GM12878 (cell line): ENCODE measurements at regions of chr1 and their contacts with region 1.

Region 1: DNA sequence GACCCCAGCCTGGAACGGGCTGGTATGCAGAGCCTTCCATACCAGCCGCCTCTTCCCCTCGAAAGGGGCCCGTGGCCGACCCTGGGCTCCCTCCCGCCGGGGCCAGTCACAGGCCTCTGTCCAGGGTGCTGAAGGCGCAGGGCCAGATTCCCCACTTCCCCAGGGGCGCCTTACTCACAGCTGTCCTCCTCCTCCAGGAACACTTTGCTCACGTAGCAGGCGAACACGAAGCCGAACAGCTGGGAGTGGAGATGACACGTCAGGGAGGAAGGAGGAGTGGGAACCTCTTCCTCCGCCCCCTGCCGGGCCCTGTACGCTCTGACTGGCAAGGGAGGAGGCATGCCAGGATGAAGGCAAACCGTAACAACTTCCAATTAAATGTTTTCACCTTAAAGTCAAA is 57.3 kb downstream of the NKAIN1 start:
- DNase-seq: no peak
- ATAC-seq: peak; percentile 75
- H3K4me3 ChIP-seq: no peak overlapping the region
- H3K27ac ChIP-seq: no peak overlapping the region
- H3K4me1 ChIP-seq: no peaks in the 10 kb centered on the region
- H3K27me3 ChIP-seq: no peaks in the 10 kb centered on the region; a peak in 3 of 4 replicates
- CTCF ChIP-seq: 0 out of 6 replicates have a peak, but pooled peaks of 1 of the 3 experiments have one; percentile 1
- EP300 ChIP-seq: no peak
- POLR2A ChIP-seq: no peak
- RAD21 ChIP-seq: no peak

Region 2: DNA sequence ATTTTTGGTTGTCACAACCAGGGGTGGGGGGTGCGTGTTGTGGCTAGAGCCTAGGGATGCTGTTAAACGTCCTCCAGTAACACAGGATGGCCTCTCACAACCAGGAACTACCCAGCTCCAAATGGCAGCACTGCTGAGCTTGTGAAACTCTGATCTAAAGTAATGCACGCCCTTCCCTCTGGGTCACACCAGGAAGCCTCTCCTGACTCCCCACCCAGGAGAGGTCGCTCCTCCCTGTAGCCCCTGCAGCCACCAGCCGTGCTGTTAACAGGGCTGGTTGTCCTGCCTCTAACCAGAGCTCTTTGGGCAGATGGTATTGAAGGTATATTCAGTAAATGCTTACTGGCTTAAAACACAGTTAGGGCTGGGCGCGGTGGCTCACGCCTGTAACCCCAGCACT is 15.9 kb before region 1 on chr1:
- CTCF ChIA-PET with region 1: interaction called, 20 read pairs
- POLR2A ChIA-PET with region 1: no interaction called
- RAD21 ChIA-PET with region 1: interaction called, 4 read pairs
- SMC1A ChIA-PET with region 1: interaction called, 3 read pairs
- in situ Hi-C with region 1: no loop called
- intact Hi-C with region 1: no loop called
- DNase-seq: no peak
- ATAC-seq: no peak
- H3K4me3 ChIP-seq: no peak overlapping the region
- H3K27ac ChIP-seq: no peak overlapping the region
- H3K4me1 ChIP-seq: peaks cover 4% of the 10 kb centered on the region
- H3K27me3 ChIP-seq: no peaks in the 10 kb centered on the region; a peak in 1 of 4 replicates
- CTCF ChIP-seq: no peak
- EP300 ChIP-seq: no peak
- POLR2A ChIP-seq: no peak
- RAD21 ChIP-seq: no peak

Region 3: GRCh38 chr1:31335007-31335406 is 152.7 kb after region 1 on chr1:
- CTCF ChIA-PET with region 1: interaction called, 20 read pairs
- POLR2A ChIA-PET with region 1: no interaction called
- RAD21 ChIA-PET with region 1: interaction called, 4 read pairs
- SMC1A ChIA-PET with region 1: no interaction called
- in situ Hi-C with region 1: no loop called
- intact Hi-C with region 1: loop called (anchors 1 kb)
- DNase-seq: peak; percentile 7
- ATAC-seq: peak; percentile 70
- H3K4me3 ChIP-seq: no peak overlapping the region
- H3K27ac ChIP-seq: no peak overlapping the region
- H3K4me1 ChIP-seq: no peaks in the 10 kb centered on the region; the same call in 1 of the 2 replicates
- H3K27me3 ChIP-seq: no peaks in the 10 kb centered on the region
- CTCF ChIP-seq: peak; percentile 30 to 55 (median 39); a peak in 4 of 6 replicates
- EP300 ChIP-seq: no peak
- POLR2A ChIP-seq: no peak
- RAD21 ChIP-seq: peak; percentile 68

Region 4: DNA sequence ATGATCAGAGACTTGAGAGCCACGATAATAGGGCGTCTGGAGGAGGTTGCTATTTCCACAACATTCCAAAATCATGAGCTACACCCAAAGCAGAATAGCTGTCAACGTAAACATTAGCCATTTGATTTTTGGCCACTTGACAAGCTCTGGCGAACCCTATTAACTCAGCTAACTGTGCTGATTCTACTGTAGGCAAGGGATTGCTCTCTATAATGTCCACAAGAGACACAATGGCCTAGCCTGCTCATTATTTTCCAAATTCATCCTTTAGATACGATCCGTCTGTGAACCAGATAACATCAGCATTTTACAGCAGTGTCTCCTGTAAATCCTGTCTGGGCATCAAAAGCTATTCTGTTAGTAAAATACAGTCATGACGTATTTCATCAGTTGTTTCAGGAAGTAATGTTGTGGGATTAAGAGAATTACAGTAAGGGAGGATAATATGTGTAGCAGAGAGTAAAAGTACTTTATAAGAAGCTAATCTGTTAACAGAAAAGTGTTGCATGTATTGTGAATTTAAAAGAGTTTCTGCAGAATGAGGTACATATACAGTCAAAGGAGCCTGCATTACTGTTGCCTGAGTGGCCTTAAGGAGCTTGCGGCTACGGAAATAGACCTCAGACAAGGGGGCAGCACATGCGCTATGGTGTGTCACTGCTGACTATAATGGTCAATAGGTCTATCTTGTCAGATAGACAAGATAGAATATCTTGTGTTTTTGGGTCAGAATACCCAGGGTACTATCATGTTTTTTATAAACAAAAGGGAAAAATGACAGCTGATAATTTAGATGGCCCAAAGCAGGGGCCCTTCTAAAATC is 349.0 kb after region 1 on chr1:
- CTCF ChIA-PET with region 1: no interaction called
- POLR2A ChIA-PET with region 1: no interaction called
- RAD21 ChIA-PET with region 1: no interaction called
- SMC1A ChIA-PET with region 1: no interaction called
- in situ Hi-C with region 1: loop called (anchors 5 kb)
- intact Hi-C with region 1: no loop called
- DNase-seq: no peak
- ATAC-seq: no peak
- H3K4me3 ChIP-seq: no peak overlapping the region
- H3K27ac ChIP-seq: no peak overlapping the region
- H3K4me1 ChIP-seq: no peaks in the 10 kb centered on the region
- H3K27me3 ChIP-seq: no peaks in the 10 kb centered on the region; a peak in 1 of 4 replicates
- CTCF ChIP-seq: no peak
- EP300 ChIP-seq: no peak
- POLR2A ChIP-seq: no peak
- RAD21 ChIP-seq: no peak

Region 5: GRCh38 chr1:31771891-31772668 is 589.7 kb after region 1 on chr1:
- CTCF ChIA-PET with region 1: no interaction called
- POLR2A ChIA-PET with region 1: no interaction called
- RAD21 ChIA-PET with region 1: no interaction called
- SMC1A ChIA-PET with region 1: no interaction called
- in situ Hi-C with region 1: no loop called
- intact Hi-C with region 1: no loop called
- DNase-seq: no peak
- ATAC-seq: peak; percentile 9; the same call in 1 of the 3 replicates
- H3K4me3 ChIP-seq: no peak overlapping the region
- H3K27ac ChIP-seq: no peak overlapping the region
- H3K4me1 ChIP-seq: peaks cover 6% of the 10 kb centered on the region
- H3K27me3 ChIP-seq: peaks cover 19 to 32% of the 10 kb centered on the region in 2 experiments
- CTCF ChIP-seq: no peak
- EP300 ChIP-seq: no peak
- POLR2A ChIP-seq: no peak
- RAD21 ChIP-seq: no peak